Activated T-helper 1 cell treated with anti-CD3 and anti-CD28 coated beads, Interleukin-12 subunit alpha, Interleukin-12 subunit beta, Interleukin-2, Interleukin-4 antibody, amounts not matched to agents 30 ng/mL and 10 ng/mL and 1 ng/mL, durations not matched to agents 14 hours and 24 hours and 36 hours (primary cell): ENCODE measurements at regions of chr13 and their contacts with region 1.

Region 1: GRCh38 chr13:76894401-76895110 is 8.4 kb upstream of the KCTD12 start:
- DNase-seq: no peak
- H3K4me3 Mint-ChIP-seq: no peak overlapping the region
- H3K27ac Mint-ChIP-seq: no peak overlapping the region
- H3K4me1 Mint-ChIP-seq: peaks cover 17% of the 10 kb centered on the region
- H3K27me3 Mint-ChIP-seq: peaks cover 21% of the 10 kb centered on the region

Region 2: DNA sequence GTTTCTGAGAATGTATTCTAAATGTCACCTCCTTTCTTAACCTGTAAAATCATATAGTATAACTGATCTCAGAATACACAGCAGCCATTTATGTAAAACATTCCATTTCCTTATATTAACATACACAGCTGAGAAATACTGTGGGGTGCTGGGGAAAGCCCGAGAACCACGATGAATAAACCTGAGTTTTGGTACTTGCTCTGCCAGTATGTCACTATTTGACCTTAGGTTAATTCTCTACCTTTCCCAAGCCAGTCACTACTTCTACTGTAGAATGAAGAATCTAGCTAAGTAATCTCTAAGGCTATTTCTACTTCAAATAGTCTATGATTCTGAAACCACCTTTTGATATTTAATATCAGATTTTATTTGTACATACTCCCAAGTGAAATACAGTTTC is 1586.3 kb before region 1 on chr13:
- intact Hi-C with region 1: loop called (anchors 5 kb)
- DNase-seq: no peak
- H3K4me3 Mint-ChIP-seq: peak overlapping the region; percentile 19
- H3K27ac Mint-ChIP-seq: peak overlapping the region; percentile 69
- H3K4me1 Mint-ChIP-seq: peaks cover 63% of the 10 kb centered on the region
- H3K27me3 Mint-ChIP-seq: no peaks in the 10 kb centered on the region